ENCODE measurements at regions of chr2 and their contacts with region 1.

Region 1: GRCh38 chr2:210002158-210003157 is at the start of gene RPE:
- DNase-seq: peak; percentile 99
- ATAC-seq: peak; percentile 99
- H3K4me3 Mint-ChIP-seq: peak within 1 kb of the TSS; percentile 92
- H3K27ac Mint-ChIP-seq: peak within 1 kb of the TSS; percentile 98
- H3K4me1 Mint-ChIP-seq: peaks cover 53% of the 10 kb centered on the region
- H3K27me3 Mint-ChIP-seq: no peaks in the 10 kb centered on the region
- total RNA-seq, gene RPE: 33.2 to 53.8 TPM

Region 2: DNA sequence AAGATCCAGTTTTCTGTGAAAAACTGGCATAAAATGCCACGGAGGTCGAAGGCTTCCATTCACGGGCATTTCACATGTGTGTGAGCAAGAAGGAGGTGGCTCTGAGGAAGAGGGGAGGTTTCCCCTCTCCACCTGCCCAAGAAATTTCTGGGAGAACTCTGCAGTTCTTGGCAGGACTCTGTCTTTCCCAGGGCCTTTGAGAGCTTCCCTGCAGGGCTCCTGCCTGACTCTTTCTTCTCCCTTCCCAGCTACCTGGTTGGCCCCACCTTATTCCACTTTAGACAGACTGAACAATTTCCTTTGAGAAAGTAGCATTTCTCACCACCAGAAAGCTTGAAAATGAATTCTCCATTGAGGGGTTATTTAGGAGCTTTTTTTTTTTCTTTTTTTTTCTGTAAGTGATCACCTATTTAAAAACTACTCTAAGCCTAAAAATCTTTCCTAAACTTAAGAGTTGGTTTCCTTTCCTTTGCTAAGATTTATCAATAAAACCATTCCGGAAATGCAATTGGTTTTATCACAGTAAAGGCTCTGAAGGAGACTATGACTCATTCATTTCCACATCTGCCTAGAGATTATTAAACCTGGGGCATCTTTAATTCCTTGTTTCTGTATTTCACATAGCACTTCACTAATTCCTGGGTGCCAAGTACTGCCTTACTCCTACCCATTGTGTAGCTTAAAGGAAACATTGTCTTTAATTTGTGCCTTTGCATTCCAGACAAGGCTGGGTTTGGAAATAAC is 171.6 kb before region 1 on chr2:
- CTCF ChIA-PET with region 1: no interaction called
- POLR2A ChIA-PET with region 1: no interaction called
- intact Hi-C with region 1: no loop called
- DNase-seq: no peak
- ATAC-seq: no peak
- H3K4me3 Mint-ChIP-seq: no peak overlapping the region
- H3K27ac Mint-ChIP-seq: no peak overlapping the region
- H3K4me1 Mint-ChIP-seq: no peaks in the 10 kb centered on the region
- H3K27me3 Mint-ChIP-seq: peaks cover 1% of the 10 kb centered on the region

Region 3: DNA sequence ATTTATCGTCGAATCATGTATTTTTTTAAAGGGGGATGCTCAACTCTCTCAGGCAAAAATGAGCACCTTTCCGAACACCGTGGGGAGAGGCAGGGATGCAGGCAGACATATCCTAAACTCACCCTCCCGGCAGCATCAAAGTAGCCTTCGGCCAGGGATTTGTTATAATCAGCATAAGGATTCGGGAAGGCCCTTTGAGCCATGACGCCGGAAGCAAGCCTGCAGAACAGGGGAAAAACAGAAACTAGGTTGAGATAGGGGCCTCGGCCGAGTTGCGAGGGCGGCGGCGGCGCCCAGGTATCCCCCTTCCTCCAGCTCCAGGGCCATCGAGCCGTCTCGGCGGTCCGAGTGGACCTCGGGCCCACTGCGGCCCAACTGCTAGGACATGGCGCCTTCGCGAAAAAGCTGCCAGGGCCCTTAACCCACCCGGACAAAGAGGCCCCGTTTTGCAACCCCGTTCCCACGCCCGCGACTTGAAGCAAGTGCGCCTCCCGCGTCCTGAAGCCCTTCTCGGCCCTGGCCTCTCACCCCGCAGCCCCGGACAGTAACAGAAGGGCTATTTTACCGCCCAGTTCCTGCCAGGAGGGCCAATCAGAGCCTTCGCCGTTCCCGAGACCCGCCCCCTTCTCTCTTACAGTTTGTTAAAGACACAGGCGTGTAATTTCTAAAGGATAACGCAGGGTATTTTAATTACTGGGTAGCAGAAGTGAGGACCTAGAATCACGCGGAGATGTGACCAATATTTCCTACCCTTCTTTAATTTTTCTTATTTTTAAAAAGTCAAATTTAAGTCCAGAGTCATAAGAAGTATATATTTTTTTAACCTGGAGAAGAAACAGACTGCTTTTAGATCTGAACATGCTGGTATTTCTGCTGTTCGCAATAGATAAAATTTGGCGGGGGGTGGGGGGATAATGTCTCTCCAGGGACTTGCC is 474.0 kb after region 1 on chr2 and contains the start of gene LANCL1:
- CTCF ChIA-PET with region 1: no interaction called
- POLR2A ChIA-PET with region 1: no interaction called
- intact Hi-C with region 1: loop called (anchors 2 to 5 kb)
- DNase-seq: peak; percentile 89
- ATAC-seq: peak; percentile 99
- H3K4me3 Mint-ChIP-seq: peak within 1 kb of the TSS; percentile 97
- H3K27ac Mint-ChIP-seq: peak within 1 kb of the TSS; percentile 97
- H3K4me1 Mint-ChIP-seq: peaks cover 45% of the 10 kb centered on the region
- H3K27me3 Mint-ChIP-seq: no peaks in the 10 kb centered on the region
- total RNA-seq, gene LANCL1: 43.3 to 45.4 TPM

Measured in activated CD4-positive, alpha-beta T cell treated with anti-CD3 and anti-CD28 coated beads for 36 hours (primary cell).